SK-N-SH (cell line): ENCODE measurements at regions of chr17 and their contacts with region 1.

Region 1: GRCh38 chr17:7572588-7573323 is 6.7 kb upstream of the CD68 start:
- DNase-seq: peak; percentile 97
- H3K4me3 ChIP-seq: peak overlapping the region; percentile 98 to 100
- H3K27ac ChIP-seq: peak overlapping the region; percentile 92
- H3K4me1 ChIP-seq: peaks cover 16 to 33% of the 10 kb centered on the region in 2 experiments
- H3K27me3 ChIP-seq: no peaks in the 10 kb centered on the region
- CTCF ChIP-seq: no peak
- EP300 ChIP-seq: no peak
- RAD21 ChIP-seq: no peak

Region 2: GRCh38 chr17:7444682-7445618 is 127.8 kb before region 1 on chr17 and contains the start of gene CHRNB1:
- CTCF ChIA-PET with region 1: no interaction called
- POLR2A ChIA-PET with region 1: no interaction called
- DNase-seq: peak; percentile 94
- H3K4me3 ChIP-seq: peak within 1 kb of the TSS in 1 of 2 experiments; percentile 17; a peak in 1 of 4 replicates
- H3K27ac ChIP-seq: peak within 1 kb of the TSS in 1 of 2 experiments; percentile 39; a peak in 1 of 4 replicates
- H3K4me1 ChIP-seq: peaks cover 7 to 17% of the 10 kb centered on the region in 2 experiments; a peak in 2 of 4 replicates
- H3K27me3 ChIP-seq: no peaks in the 10 kb centered on the region
- CTCF ChIP-seq: no peak
- EP300 ChIP-seq: no peak
- RAD21 ChIP-seq: no peak
- polyA plus RNA-seq, gene CHRNB1: 26.8 and 29.7 TPM in 2 replicates

Region 3: GRCh38 chr17:7583253-7584109 is 10.7 kb after region 1 on chr17 and contains the start of gene MPDU1:
- CTCF ChIA-PET with region 1: interaction called, 8 read pairs
- POLR2A ChIA-PET with region 1: interaction called, 37 read pairs
- DNase-seq: peak; percentile 93
- H3K4me3 ChIP-seq: peak within 1 kb of the TSS; percentile 65 to 73
- H3K27ac ChIP-seq: peak within 1 kb of the TSS; percentile 97 to 98
- H3K4me1 ChIP-seq: peaks cover 22 to 32% of the 10 kb centered on the region in 2 experiments; a peak in 3 of 4 replicates
- H3K27me3 ChIP-seq: no peaks in the 10 kb centered on the region
- CTCF ChIP-seq: no peak
- EP300 ChIP-seq: no peak
- RAD21 ChIP-seq: no peak
- polyA plus RNA-seq, gene MPDU1: 126 and 142 TPM in 2 replicates